ENCODE measurements at regions of chr15 and their contacts with region 1.

Region 1: DNA sequence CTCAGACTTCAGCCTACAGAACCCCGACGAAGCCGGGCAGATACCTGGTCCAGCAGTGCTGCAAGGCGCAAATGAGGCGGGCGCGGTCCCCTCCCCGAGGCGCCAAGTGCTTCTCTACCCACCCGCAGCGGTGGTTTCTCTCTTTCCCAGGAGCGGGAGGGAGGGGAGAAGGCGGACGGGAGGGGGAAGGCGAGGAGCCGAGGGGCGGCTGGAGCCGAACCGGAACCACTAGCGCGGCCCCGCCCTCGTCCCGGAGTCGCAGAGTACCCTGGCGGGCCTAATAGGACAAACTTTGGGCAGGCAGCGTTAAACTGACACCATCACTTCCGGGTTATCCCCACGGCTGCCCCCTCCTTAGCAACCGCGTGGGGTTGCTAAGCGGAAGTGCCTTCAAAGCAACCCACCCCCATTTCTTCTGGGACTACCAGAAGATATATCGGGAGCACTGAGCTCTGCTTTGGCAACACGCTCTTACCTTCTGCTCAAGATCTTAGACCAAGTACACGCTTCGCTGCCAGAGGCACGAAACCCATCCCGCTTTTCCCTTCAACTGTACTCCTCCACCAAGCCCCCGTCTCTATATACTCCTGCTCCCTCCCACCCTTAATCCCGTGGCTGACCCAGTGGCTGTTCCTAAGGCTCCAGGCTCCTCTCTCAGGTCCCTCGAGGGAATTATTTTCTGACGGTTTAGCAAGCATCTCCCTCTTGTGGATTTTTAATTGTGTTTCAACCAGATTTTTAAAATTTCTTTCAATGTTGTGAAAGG is at the start of gene CSNK1G1:
- DNase-seq: peak; percentile 95
- ATAC-seq: peak; percentile 98
- H3K4me3 ChIP-seq: peak within 1 kb of the TSS; percentile 75 to 92 (median 86)
- H3K4me3 Mint-ChIP-seq: peak within 1 kb of the TSS; percentile 94
- H3K27ac ChIP-seq: peak within 1 kb of the TSS; percentile 50 to 78
- H3K27ac Mint-ChIP-seq: peak within 1 kb of the TSS; percentile 88
- H3K4me1 ChIP-seq: peaks cover 9 to 16% of the 10 kb centered on the region in 2 donors
- H3K4me1 Mint-ChIP-seq: peaks cover 15% of the 10 kb centered on the region
- H3K27me3 ChIP-seq: no peaks in the 10 kb centered on the region
- H3K27me3 Mint-ChIP-seq: no peaks in the 10 kb centered on the region
- CTCF ChIP-seq: peak; percentile 55
- total RNA-seq, gene CSNK1G1: 39.0 and 40.3 TPM in 2 replicates

Region 2: DNA sequence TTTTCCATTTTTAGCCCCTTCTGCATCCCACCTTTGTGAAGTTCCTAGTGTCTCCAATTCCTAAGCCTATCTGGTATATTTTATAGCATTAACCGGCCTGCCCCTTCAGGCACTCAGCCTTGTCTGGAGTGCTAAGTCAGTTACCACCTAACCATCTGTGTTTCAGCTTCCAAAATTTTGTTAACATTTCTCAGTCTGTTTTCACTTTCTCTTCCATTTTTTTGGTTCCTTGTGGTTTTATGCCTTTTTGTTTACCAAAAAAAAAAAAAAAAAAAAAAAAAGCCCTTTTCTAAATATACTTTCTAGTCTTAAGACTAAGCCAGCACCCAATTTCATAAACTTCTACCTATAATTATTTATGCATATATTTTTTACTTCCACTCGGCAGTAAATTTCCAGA is 92.6 kb before region 1 on chr15:
- CTCF ChIA-PET with region 1: no interaction called
- POLR2A ChIA-PET with region 1: interaction called, 13 read pairs
- intact Hi-C with region 1: no loop called
- DNase-seq: peak; percentile 48
- ATAC-seq: peak; percentile 39
- H3K4me3 ChIP-seq: no peak overlapping the region
- H3K4me3 Mint-ChIP-seq: peak overlapping the region; percentile 31
- H3K27ac ChIP-seq: no peak overlapping the region
- H3K27ac Mint-ChIP-seq: peak overlapping the region; percentile 44
- H3K4me1 ChIP-seq: peaks cover 10 to 13% of the 10 kb centered on the region in 2 donors
- H3K4me1 Mint-ChIP-seq: peaks cover 33% of the 10 kb centered on the region
- H3K27me3 ChIP-seq: no peaks in the 10 kb centered on the region
- H3K27me3 Mint-ChIP-seq: no peaks in the 10 kb centered on the region
- CTCF ChIP-seq: no peak

Region 3: GRCh38 chr15:64315136-64315660 is 40.9 kb before region 1 on chr15:
- CTCF ChIA-PET with region 1: no interaction called
- POLR2A ChIA-PET with region 1: no interaction called
- intact Hi-C with region 1: no loop called
- DNase-seq: no peak
- ATAC-seq: no peak
- H3K4me3 ChIP-seq: no peak overlapping the region
- H3K4me3 Mint-ChIP-seq: no peak overlapping the region
- H3K27ac ChIP-seq: no peak overlapping the region
- H3K27ac Mint-ChIP-seq: no peak overlapping the region
- H3K4me1 ChIP-seq: no peaks in the 10 kb centered on the region
- H3K4me1 Mint-ChIP-seq: peaks cover 11% of the 10 kb centered on the region
- H3K27me3 ChIP-seq: no peaks in the 10 kb centered on the region
- H3K27me3 Mint-ChIP-seq: no peaks in the 10 kb centered on the region
- CTCF ChIP-seq: no peak

Region 4: GRCh38 chr15:64381000-64381752 is 25.0 kb after region 1 on chr15 and contains the start of gene PCLAF:
- CTCF ChIA-PET with region 1: no interaction called
- POLR2A ChIA-PET with region 1: no interaction called
- intact Hi-C with region 1: loop called (anchors 1 kb)
- DNase-seq: peak; percentile 90
- ATAC-seq: peak; percentile 100
- H3K4me3 ChIP-seq: peak within 1 kb of the TSS; percentile 53 to 74 (median 69)
- H3K4me3 Mint-ChIP-seq: peak within 1 kb of the TSS; percentile 98
- H3K27ac ChIP-seq: peak within 1 kb of the TSS in 1 of 2 donors; percentile 14
- H3K27ac Mint-ChIP-seq: peak within 1 kb of the TSS; percentile 84
- H3K4me1 ChIP-seq: peaks cover 7 to 10% of the 10 kb centered on the region in 2 donors
- H3K4me1 Mint-ChIP-seq: peaks cover 16% of the 10 kb centered on the region
- H3K27me3 ChIP-seq: no peaks in the 10 kb centered on the region
- H3K27me3 Mint-ChIP-seq: no peaks in the 10 kb centered on the region
- CTCF ChIP-seq: no peak
- total RNA-seq, gene PCLAF: 0.42 and 0.46 TPM in 2 replicates

Region 5: DNA sequence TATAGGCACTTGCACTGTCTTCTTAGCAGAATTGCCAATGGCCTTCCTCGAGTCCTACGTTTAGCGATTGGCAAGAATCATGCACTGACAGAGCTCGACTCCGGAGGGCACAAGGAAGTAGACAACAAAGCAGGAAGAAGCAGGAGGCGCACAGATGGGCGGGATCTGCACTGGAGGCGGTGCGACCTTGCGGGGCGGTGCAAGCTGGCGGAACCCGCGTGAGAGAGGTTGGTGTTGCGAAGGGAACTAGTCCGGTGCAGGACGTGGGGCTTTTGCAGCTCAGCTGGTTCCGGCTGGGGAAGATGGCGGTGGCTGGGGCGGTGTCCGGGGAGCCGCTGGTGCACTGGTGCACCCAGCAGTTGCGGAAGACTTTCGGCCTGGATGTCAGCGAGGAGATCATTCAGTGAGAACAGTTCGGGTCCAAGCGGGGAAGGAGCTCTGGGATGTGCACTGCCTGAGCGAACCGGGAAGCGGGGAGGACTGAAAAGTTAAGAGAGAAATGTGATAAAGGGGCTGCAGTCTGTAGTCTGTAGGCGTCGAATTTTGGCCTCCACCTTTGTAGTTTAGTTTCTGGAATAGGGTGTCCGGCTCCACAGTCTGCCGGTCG is 31.5 kb after region 1 on chr15 and contains the start of gene TRIP4:
- CTCF ChIA-PET with region 1: interaction called, 4 read pairs
- POLR2A ChIA-PET with region 1: interaction called, 5 read pairs
- intact Hi-C with region 1: loop called (anchors 1 kb)
- DNase-seq: peak; percentile 96
- ATAC-seq: peak; percentile 100
- H3K4me3 ChIP-seq: peak within 1 kb of the TSS; percentile 63 to 97 (median 82)
- H3K4me3 Mint-ChIP-seq: peak within 1 kb of the TSS; percentile 97
- H3K27ac ChIP-seq: peak within 1 kb of the TSS; percentile 58 to 70
- H3K27ac Mint-ChIP-seq: peak within 1 kb of the TSS; percentile 95
- H3K4me1 ChIP-seq: peaks cover 10 to 18% of the 10 kb centered on the region in 2 donors
- H3K4me1 Mint-ChIP-seq: peaks cover 15% of the 10 kb centered on the region
- H3K27me3 ChIP-seq: no peaks in the 10 kb centered on the region
- H3K27me3 Mint-ChIP-seq: no peaks in the 10 kb centered on the region
- CTCF ChIP-seq: no peak
- total RNA-seq, gene TRIP4: 35.7 and 38.2 TPM in 2 replicates

Region 6: DNA sequence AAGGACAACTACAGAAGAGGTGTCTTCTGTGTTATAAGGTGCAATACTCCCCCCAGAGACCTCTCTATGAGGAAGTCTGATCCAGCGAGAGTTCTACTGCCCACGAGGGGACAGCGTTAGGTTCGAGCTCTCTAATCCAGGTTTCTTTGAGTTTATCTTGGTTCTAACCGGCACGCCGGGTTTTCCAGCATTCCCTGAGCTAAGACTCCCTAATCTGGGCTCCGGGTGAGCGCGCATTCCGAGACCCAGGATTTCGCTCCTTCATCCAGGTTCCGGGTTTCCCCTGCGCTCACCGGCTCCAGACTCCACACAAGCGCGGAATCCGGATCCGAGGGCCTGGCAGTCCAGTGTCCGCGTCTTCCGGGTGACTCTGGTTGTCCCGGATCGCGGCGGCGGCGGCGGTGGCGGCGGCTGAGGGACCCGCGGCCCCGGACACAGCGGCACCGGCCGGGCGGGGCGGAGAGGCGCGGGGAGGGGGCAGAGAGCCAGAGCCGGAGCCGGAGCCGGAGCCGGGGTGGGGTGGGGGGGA is 104.1 kb after region 1 on chr15 and contains the start of gene ZNF609:
- CTCF ChIA-PET with region 1: no interaction called
- POLR2A ChIA-PET with region 1: no interaction called
- intact Hi-C with region 1: loop called (anchors 2 kb)
- DNase-seq: peak; percentile 89
- ATAC-seq: peak; percentile 86
- H3K4me3 ChIP-seq: peak within 1 kb of the TSS; percentile 52 to 72 (median 62)
- H3K4me3 Mint-ChIP-seq: peak within 1 kb of the TSS; percentile 86
- H3K27ac ChIP-seq: peak within 1 kb of the TSS in 1 of 2 donors; percentile 53
- H3K27ac Mint-ChIP-seq: peak within 1 kb of the TSS; percentile 75
- H3K4me1 ChIP-seq: peaks cover 60 to 61% of the 10 kb centered on the region in 2 donors
- H3K4me1 Mint-ChIP-seq: peaks cover 62% of the 10 kb centered on the region
- H3K27me3 ChIP-seq: no peaks in the 10 kb centered on the region
- H3K27me3 Mint-ChIP-seq: no peaks in the 10 kb centered on the region
- CTCF ChIP-seq: no peak
- total RNA-seq, gene ZNF609: 32.9 and 36.7 TPM in 2 replicates